ENCODE measurements at regions of chr7 and their contacts with region 1.

Region 1: DNA sequence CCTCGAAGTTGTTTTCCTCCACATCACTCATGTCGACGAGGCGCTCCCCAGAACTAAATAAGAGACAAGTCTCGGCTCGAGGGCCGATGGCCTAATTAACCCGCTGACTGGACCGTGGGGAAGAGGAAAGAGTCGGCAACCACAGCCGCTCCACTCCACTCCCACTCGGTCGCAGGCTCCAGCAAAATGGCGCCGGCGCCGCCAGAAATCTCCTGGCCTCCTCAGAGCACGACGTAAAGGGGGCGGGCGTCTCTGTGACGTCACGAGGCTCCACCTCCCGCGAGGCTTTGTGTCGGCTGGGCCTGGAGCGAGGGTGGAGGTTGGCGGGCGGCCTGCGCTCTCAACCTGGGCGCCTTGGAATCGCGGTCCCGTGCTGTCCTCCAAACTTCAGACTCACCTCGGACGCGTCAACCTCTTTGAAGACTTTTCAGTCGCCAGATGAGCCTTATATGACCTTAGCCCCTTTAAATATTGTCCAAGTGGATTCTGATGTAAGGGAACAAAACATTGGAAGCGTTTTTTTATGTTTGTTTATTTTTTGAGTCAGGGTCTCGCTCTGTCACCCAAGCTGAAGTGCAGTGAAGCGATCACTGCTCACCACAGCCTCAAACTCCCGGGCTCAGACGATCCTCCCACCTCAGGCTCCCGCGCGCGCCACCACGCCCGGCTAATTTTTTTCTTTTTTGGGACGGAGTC is at the start of gene TRA2A:
- DNase-seq: peak; percentile 97
- ATAC-seq: peak; percentile 90
- H3K4me3 ChIP-seq: peak within 1 kb of the TSS; percentile 80 to 100 (median 100)
- H3K4me3 Mint-ChIP-seq: peak within 1 kb of the TSS; percentile 99
- H3K27ac ChIP-seq: peak within 1 kb of the TSS; percentile 97 to 99
- H3K27ac Mint-ChIP-seq: peak within 1 kb of the TSS; percentile 99
- H3K4me1 ChIP-seq: peaks cover 29 to 30% of the 10 kb centered on the region in 2 donors
- H3K4me1 Mint-ChIP-seq: peaks cover 44% of the 10 kb centered on the region
- H3K27me3 ChIP-seq: no peaks in the 10 kb centered on the region
- H3K27me3 Mint-ChIP-seq: no peaks in the 10 kb centered on the region
- CTCF ChIP-seq: no peak
- total RNA-seq, gene TRA2A: 173 and 184 TPM in 2 replicates

Region 2: DNA sequence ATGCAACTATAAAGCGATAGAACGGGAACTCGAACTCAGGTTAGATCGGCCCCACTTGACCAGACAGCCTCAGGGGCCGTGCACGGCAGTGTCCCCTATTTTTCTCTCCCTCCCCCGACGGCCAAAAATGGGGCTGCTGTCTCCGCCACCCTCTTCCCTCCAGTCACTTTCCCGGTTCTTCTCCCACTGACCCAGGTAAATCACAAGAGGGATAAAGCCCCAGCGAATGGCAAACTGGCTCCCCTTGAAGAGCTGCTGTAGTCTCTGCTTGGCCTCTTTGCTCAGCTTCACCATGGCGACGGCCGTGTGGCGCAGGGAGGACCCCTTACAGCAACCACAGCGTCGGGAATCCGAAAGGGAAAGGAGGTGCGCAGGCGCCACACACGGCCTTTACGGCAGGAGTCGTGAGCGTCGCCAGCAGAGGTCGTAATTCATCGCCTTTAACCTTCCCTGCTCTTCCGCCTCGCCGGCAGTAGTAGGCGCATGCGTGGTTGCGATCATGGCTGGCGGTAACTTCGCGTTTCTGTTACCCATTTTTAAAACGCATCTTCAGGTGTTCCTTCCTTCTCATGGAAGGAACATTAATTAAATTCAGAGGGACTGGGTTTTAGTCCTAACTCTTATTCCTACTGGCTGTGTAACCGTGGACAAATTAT is 709.3 kb before region 1 on chr7 and contains the start of gene TOMM7:
- CTCF ChIA-PET with region 1: no interaction called
- POLR2A ChIA-PET with region 1: no interaction called
- intact Hi-C with region 1: loop called (anchors 5 kb)
- DNase-seq: peak; percentile 97
- ATAC-seq: peak; percentile 98
- H3K4me3 ChIP-seq: peak within 1 kb of the TSS; percentile 82 to 97 (median 94)
- H3K4me3 Mint-ChIP-seq: peak within 1 kb of the TSS; percentile 98
- H3K27ac ChIP-seq: peak within 1 kb of the TSS; percentile 79 to 81
- H3K27ac Mint-ChIP-seq: peak within 1 kb of the TSS; percentile 97
- H3K4me1 ChIP-seq: peaks cover 12 to 21% of the 10 kb centered on the region in 2 donors
- H3K4me1 Mint-ChIP-seq: peaks cover 32% of the 10 kb centered on the region
- H3K27me3 ChIP-seq: no peaks in the 10 kb centered on the region
- H3K27me3 Mint-ChIP-seq: peaks cover 10% of the 10 kb centered on the region
- CTCF ChIP-seq: no peak
- total RNA-seq, gene TOMM7: 400 and 437 TPM in 2 replicates

Region 3: DNA sequence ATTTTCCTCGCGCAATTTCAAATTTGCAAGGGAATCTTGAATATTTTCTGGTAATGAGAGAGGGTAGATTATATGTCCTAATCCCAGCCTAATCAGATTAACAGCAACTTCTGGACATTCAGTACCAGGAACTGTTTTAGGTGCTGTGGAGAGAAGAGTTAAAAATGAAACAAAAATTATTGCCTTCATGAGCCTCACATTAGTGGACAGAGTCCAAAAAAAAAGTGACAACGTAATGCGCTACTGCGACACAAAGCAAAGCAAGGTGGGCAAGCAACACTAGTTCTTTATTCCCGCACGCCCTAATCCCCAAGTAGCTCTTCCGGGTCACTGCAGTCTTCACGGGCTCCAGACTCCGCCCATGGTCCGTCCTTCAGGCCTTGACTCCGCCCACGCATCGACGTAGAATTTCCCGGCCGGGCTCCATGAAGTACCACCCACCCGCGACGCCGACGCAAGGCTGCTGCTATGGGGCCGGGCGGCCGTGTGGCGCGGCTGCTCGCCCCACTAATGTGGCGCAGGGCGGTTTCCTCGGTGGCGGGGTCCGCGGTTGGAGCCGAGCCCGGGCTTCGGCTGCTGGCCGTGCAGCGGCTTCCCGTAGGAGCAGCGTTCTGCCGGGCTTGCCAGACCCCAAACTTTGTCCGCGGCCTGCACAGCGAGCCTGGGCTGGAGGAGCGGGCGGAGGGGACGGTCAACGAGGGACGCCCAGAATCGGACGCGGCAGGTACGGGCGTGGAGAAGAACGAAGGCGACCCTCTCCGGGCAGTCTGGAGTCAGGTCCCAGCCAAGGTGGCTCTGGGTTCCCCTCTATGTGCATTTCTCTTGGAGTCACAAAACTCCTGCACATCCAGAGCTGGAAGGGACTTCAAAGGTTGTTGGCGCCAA is 232.8 kb before region 1 on chr7 and contains the start of gene MALSU1:
- CTCF ChIA-PET with region 1: no interaction called
- POLR2A ChIA-PET with region 1: no interaction called
- intact Hi-C with region 1: loop called (anchors 1 kb)
- DNase-seq: peak; percentile 98
- ATAC-seq: peak; percentile 100
- H3K4me3 ChIP-seq: peak within 1 kb of the TSS; percentile 70 to 95 (median 86)
- H3K4me3 Mint-ChIP-seq: peak within 1 kb of the TSS; percentile 87
- H3K27ac ChIP-seq: peak within 1 kb of the TSS; percentile 73 to 86
- H3K27ac Mint-ChIP-seq: peak within 1 kb of the TSS; percentile 94
- H3K4me1 ChIP-seq: peaks cover 16 to 23% of the 10 kb centered on the region in 2 donors
- H3K4me1 Mint-ChIP-seq: peaks cover 39% of the 10 kb centered on the region
- H3K27me3 ChIP-seq: peaks cover 0 to 6% (median 0%) of the 10 kb centered on the region in 4 experiments
- H3K27me3 Mint-ChIP-seq: no peaks in the 10 kb centered on the region
- CTCF ChIP-seq: no peak
- total RNA-seq, gene MALSU1: 38.0 and 40.8 TPM in 2 replicates

Region 4: GRCh38 chr7:23410446-23411183 is 121.3 kb before region 1 on chr7:
- CTCF ChIA-PET with region 1: no interaction called
- POLR2A ChIA-PET with region 1: no interaction called
- intact Hi-C with region 1: loop called (anchors 1 kb)
- DNase-seq: peak; percentile 87
- ATAC-seq: peak; percentile 90
- H3K4me3 ChIP-seq: no peak overlapping the region
- H3K4me3 Mint-ChIP-seq: peak overlapping the region; percentile 47
- H3K27ac ChIP-seq: peak overlapping the region; percentile 37 to 82
- H3K27ac Mint-ChIP-seq: peak overlapping the region; percentile 53
- H3K4me1 ChIP-seq: peaks cover 17 to 18% of the 10 kb centered on the region in 2 donors
- H3K4me1 Mint-ChIP-seq: peaks cover 27% of the 10 kb centered on the region
- H3K27me3 ChIP-seq: no peaks in the 10 kb centered on the region
- H3K27me3 Mint-ChIP-seq: peaks cover 3% of the 10 kb centered on the region
- CTCF ChIP-seq: no peak

Region 5: GRCh38 chr7:23546897-23547572 is 15.1 kb after region 1 on chr7:
- CTCF ChIA-PET with region 1: interaction called, 13 read pairs
- POLR2A ChIA-PET with region 1: no interaction called
- intact Hi-C with region 1: loop called (anchors 1 kb)
- DNase-seq: peak; percentile 90
- ATAC-seq: peak; percentile 91
- H3K4me3 ChIP-seq: peak overlapping the region in 1 of 5 experiments; percentile 18
- H3K4me3 Mint-ChIP-seq: no peak overlapping the region
- H3K27ac ChIP-seq: no peak overlapping the region
- H3K27ac Mint-ChIP-seq: no peak overlapping the region
- H3K4me1 ChIP-seq: peaks cover 8 to 13% of the 10 kb centered on the region in 2 donors
- H3K4me1 Mint-ChIP-seq: peaks cover 15% of the 10 kb centered on the region
- H3K27me3 ChIP-seq: no peaks in the 10 kb centered on the region
- H3K27me3 Mint-ChIP-seq: no peaks in the 10 kb centered on the region
- CTCF ChIP-seq: peak; percentile 98

Region 6: GRCh38 chr7:23679898-23680413 is 148.0 kb after region 1 on chr7 and contains the start of gene FAM221A:
- CTCF ChIA-PET with region 1: no interaction called
- POLR2A ChIA-PET with region 1: no interaction called
- intact Hi-C with region 1: loop called (anchors 1 kb)
- DNase-seq: peak; percentile 89
- ATAC-seq: peak; percentile 99
- H3K4me3 ChIP-seq: peak within 1 kb of the TSS; percentile 51 to 85 (median 75)
- H3K4me3 Mint-ChIP-seq: peak within 1 kb of the TSS; percentile 90
- H3K27ac ChIP-seq: peak within 1 kb of the TSS in 1 of 2 donors; percentile 57
- H3K27ac Mint-ChIP-seq: peak within 1 kb of the TSS; percentile 81
- H3K4me1 ChIP-seq: peaks cover 0 to 15% of the 10 kb centered on the region in 2 donors
- H3K4me1 Mint-ChIP-seq: peaks cover 9% of the 10 kb centered on the region
- H3K27me3 ChIP-seq: no peaks in the 10 kb centered on the region
- H3K27me3 Mint-ChIP-seq: no peaks in the 10 kb centered on the region
- CTCF ChIP-seq: peak; percentile 80
- total RNA-seq, gene FAM221A: 10.7 and 10.8 TPM in 2 replicates

Region 7: DNA sequence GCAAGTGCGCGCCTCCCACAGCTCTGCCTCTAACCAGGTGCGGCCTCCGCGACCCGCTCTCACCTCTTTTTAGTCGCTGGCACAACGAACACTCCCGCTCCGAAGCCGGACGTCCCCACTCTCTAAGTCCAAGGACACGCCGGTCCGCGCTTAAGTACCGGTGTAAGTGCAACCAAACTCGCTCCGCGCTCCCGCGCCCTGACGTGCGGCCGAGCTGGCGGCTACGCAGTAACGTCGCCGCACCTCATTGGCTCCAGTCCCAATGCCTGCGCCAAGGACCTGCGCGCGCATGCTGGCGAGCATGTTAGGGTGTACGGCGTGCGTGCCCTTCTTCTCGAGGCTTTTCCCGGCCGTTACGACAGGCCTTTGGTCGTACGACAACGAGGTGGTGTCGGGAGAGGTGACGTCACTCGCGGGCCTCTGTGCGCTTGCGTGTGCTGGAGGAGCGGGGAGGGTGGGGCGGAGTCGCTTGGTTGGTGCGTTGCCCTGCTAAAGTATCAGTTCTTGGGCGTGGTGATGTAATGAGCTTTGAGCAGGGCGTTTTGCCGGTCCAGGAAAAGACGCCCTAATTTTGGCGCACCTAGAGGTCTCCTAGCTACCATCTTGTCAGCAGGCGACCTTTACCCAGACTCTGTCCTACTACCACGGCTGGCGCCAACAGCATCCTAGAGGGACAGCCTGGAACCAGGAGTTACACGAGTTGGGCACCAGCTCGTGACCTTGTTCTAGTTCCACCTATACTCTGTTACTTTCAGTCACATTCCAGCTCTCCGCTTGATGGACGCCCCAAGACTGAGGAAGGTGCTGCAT is 1593.4 kb after region 1 on chr7 and contains the start of gene CYCS:
- CTCF ChIA-PET with region 1: no interaction called
- POLR2A ChIA-PET with region 1: no interaction called
- intact Hi-C with region 1: loop called (anchors 1 kb)
- DNase-seq: peak; percentile 100
- ATAC-seq: peak; percentile 91
- H3K4me3 ChIP-seq: peak within 1 kb of the TSS; percentile 57 to 94 (median 86)
- H3K4me3 Mint-ChIP-seq: peak within 1 kb of the TSS; percentile 100
- H3K27ac ChIP-seq: peak within 1 kb of the TSS; percentile 96 to 99
- H3K27ac Mint-ChIP-seq: peak within 1 kb of the TSS; percentile 99
- H3K4me1 ChIP-seq: peaks cover 13 to 15% of the 10 kb centered on the region in 2 donors
- H3K4me1 Mint-ChIP-seq: peaks cover 27% of the 10 kb centered on the region
- H3K27me3 ChIP-seq: no peaks in the 10 kb centered on the region
- H3K27me3 Mint-ChIP-seq: no peaks in the 10 kb centered on the region
- CTCF ChIP-seq: no peak
- total RNA-seq, gene CYCS: 48.8 and 51.3 TPM in 2 replicates